Transverse colon (tissue), 4 donors: ENCODE measurements at regions of chr4 and their contacts with region 1.

Region 1: GRCh38 chr4:66840178-66840577 is 705.1 kb downstream of the CENPC start:
- DNase-seq: no peak
- H3K4me3 ChIP-seq: no peak overlapping the region
- H3K27ac ChIP-seq: no peak overlapping the region
- H3K4me1 ChIP-seq: no peaks in the 10 kb centered on the region
- H3K27me3 ChIP-seq: no peaks in the 10 kb centered on the region
- CTCF ChIP-seq: no peak
- EP300 ChIP-seq: no peak
- POLR2A ChIP-seq: no peak

Region 2: DNA sequence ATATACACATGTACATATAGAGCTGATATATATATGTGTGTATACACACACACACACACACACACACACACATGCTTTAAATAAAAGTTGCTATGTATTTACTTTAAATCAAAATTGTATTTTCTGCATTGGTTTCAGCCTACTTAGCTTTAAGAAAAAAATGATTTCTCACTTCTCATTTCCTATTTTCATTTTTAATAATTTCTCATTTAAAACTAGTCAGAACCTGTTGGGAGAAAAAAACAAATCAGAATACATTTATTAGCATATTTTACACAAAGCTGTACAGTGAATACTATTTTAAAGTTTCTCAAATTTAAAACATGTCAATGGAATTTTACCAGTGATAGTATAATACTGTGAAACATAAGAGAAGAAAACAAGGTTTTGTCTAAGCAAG is 23.3 kb after region 1 on chr4:
- in situ Hi-C with region 1: no loop called
- intact Hi-C with region 1: loop called (anchors 2 kb)
- DNase-seq: no peak
- H3K4me3 ChIP-seq: no peak overlapping the region
- H3K27ac ChIP-seq: no peak overlapping the region
- H3K4me1 ChIP-seq: no peaks in the 10 kb centered on the region
- H3K27me3 ChIP-seq: no peaks in the 10 kb centered on the region
- CTCF ChIP-seq: no peak
- EP300 ChIP-seq: no peak
- POLR2A ChIP-seq: no peak